ENCODE measurements at regions of chr2 and their contacts with region 1.

Region 1: GRCh38 chr2:169479257-169480078 is at the start of gene BBS5:
- DNase-seq: peak; percentile 68 to 78
- ATAC-seq: peak; percentile 88 to 92
- H3K4me3 ChIP-seq: peak within 1 kb of the TSS; percentile 70 to 95 (median 76)
- H3K27ac ChIP-seq: peak within 1 kb of the TSS; percentile 71 to 84 (median 80)
- H3K4me1 ChIP-seq: peaks cover 11 to 13% of the 10 kb centered on the region in 2 donors
- H3K27me3 ChIP-seq: no peaks in the 10 kb centered on the region
- CTCF ChIP-seq: peak in 4 of 5 experiments; percentile 47 to 68 (median 50)
- POLR2A ChIP-seq: peak in 1 of 2 donors; percentile 18
- total RNA-seq, gene BBS5: 4.5 to 17.8 (median 8.0) TPM

Region 2: DNA sequence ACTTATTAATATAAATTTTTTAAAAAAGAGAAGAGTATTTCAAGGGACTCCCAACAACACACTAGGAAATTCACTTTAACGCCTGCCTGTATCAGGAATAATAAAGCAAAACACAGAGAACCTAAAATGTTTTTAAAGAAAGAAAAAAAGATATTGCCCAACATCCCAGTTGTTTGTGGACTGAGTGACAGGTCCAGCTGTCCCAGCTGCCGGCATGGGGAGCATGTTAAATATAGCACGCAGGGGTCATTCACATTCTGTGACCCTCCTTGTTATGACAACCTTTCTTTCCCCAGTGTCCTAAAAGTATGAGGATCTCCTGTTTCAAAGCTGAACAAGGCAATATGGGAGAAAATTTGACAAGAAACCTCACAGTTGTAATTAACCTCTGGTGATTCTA is 34.5 kb after region 1 on chr2:
- in situ Hi-C with region 1: no loop called
- intact Hi-C with region 1: loop called (anchors 5 kb)
- DNase-seq: peak; percentile 78 to 90
- ATAC-seq: peak; percentile 65 to 70
- H3K4me3 ChIP-seq: peak overlapping the region; percentile 71 to 74 (median 72)
- H3K27ac ChIP-seq: peak overlapping the region; percentile 90 to 95 (median 92)
- H3K4me1 ChIP-seq: peaks cover 29 to 31% of the 10 kb centered on the region in 2 donors
- H3K27me3 ChIP-seq: no peaks in the 10 kb centered on the region
- CTCF ChIP-seq: no peak
- POLR2A ChIP-seq: peak in 1 of 2 donors; percentile 63

Region 3: GRCh38 chr2:169528271-169528701 is 48.8 kb after region 1 on chr2:
- in situ Hi-C with region 1: no loop called
- intact Hi-C with region 1: loop called (anchors 2 kb)
- DNase-seq: peak; percentile 37 to 66
- ATAC-seq: peak; percentile 57 to 83
- H3K4me3 ChIP-seq: no peak overlapping the region
- H3K27ac ChIP-seq: peak overlapping the region in 2 of 4 donors; percentile 11 to 57
- H3K4me1 ChIP-seq: no peaks in the 10 kb centered on the region
- H3K27me3 ChIP-seq: no peaks in the 10 kb centered on the region
- CTCF ChIP-seq: peak; percentile 70 to 85 (median 77)
- POLR2A ChIP-seq: peak in 1 of 2 donors; percentile 6

Region 4: GRCh38 chr2:169573160-169573973 is 93.9 kb after region 1 on chr2 and contains the start of gene FASTKD1:
- in situ Hi-C with region 1: no loop called
- intact Hi-C with region 1: loop called (anchors 5 kb)
- DNase-seq: peak; percentile 81 to 86
- ATAC-seq: peak; percentile 98
- H3K4me3 ChIP-seq: peak within 1 kb of the TSS; percentile 63 to 88 (median 79)
- H3K27ac ChIP-seq: peak within 1 kb of the TSS; percentile 79 to 82 (median 80)
- H3K4me1 ChIP-seq: peaks cover 18 to 20% of the 10 kb centered on the region in 2 donors
- H3K27me3 ChIP-seq: no peaks in the 10 kb centered on the region
- CTCF ChIP-seq: no peak
- POLR2A ChIP-seq: peak in 1 of 2 donors; percentile 20
- total RNA-seq, gene FASTKD1: 9.7 to 27.4 (median 12.9) TPM